ENCODE measurements at regions of chr4 and their contacts with region 1.

Region 1: DNA sequence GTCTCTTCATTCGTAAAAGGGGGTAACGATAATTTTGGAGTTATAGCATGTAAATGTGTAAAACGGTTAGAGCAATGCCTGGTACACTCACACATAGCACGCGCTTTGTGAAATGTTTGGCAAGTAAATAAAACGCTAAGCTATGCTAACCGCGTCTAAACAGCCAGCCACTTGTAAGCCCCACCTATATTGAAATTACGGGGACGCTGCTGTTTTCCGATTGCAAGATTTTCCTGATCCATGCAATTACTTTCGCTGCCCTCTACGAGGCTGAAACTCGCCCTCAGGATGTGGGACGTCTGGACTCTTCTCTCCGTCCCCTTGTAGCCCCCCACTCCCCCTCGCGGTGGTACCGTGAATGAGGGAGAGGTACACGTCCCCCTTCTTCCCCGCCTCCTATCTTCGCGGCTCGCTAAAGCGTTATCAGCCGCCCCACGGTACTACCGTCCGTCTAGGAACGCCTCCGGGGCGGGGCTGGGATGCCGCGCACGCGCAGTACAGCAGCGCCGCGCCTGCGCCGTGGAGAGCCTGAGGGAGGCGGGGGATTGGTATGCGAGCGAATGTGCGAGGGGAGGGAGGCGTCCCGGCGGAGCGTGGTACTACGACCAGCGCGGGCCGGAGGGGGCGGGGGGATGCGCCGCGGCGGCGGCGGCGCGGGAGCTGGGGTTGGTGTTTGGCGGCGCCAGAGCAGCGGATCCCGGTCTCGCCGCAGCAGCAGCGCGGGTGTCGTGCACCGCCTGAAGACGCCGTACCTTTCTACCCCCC is at the start of gene STIM2:
- DNase-seq: peak; percentile 96 to 99 (median 97)
- ATAC-seq: peak; percentile 93 to 96 (median 94)
- H3K4me3 ChIP-seq: peak within 1 kb of the TSS; percentile 61 to 93 (median 82)
- H3K27ac ChIP-seq: peak within 1 kb of the TSS; percentile 56 to 97 (median 94)
- H3K4me1 ChIP-seq: peaks cover 0 to 63% (median 39%) of the 10 kb centered on the region in 12 donors
- H3K27me3 ChIP-seq: no peaks in the 10 kb centered on the region
- CTCF ChIP-seq: peak in 10 of 12 donors; percentile 12 to 55 (median 32)
- POLR2A ChIP-seq: peak in 1 of 2 donors; percentile 94
- total RNA-seq, gene STIM2: 7.5 to 17.3 (median 9.9) TPM

Region 2: DNA sequence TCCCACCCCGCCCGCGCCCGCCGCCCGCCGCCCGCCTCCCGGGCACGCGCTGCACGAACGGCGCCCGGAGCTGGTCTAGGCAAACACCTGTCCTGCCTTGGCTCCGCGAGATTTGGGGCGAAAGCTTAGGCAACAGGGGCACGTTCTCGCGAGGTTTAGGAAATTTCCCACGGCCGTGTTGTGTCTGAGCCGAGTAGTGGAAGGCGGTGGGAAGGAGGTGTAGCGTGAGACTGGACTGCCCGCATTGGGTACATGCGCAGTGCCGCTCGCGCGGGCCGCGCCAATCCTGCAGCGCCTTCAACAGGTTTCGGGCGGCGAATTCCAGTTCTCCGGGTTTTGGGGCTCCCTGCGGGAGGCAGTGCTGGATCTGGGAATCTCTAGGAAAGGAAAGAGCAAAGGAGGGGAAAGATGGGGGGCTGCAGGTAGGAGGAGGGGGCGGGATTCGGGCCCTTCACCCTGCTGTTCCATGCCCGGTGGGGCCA is 540.8 kb before region 1 on chr4:
- intact Hi-C with region 1: loop called in 1 of 10 experiments (anchors 5 kb)
- DNase-seq: peak; percentile 97 to 98 (median 98)
- ATAC-seq: peak; percentile 93 to 95 (median 94)
- H3K4me3 ChIP-seq: peak overlapping the region; percentile 44 to 92 (median 74)
- H3K27ac ChIP-seq: peak overlapping the region; percentile 63 to 97 (median 92)
- H3K4me1 ChIP-seq: peaks cover 0 to 39% (median 28%) of the 10 kb centered on the region in 12 donors
- H3K27me3 ChIP-seq: no peaks in the 10 kb centered on the region
- CTCF ChIP-seq: peak in 5 of 12 donors; percentile 6 to 31 (median 20)
- POLR2A ChIP-seq: peak in 1 of 2 donors; percentile 29

Region 3: DNA sequence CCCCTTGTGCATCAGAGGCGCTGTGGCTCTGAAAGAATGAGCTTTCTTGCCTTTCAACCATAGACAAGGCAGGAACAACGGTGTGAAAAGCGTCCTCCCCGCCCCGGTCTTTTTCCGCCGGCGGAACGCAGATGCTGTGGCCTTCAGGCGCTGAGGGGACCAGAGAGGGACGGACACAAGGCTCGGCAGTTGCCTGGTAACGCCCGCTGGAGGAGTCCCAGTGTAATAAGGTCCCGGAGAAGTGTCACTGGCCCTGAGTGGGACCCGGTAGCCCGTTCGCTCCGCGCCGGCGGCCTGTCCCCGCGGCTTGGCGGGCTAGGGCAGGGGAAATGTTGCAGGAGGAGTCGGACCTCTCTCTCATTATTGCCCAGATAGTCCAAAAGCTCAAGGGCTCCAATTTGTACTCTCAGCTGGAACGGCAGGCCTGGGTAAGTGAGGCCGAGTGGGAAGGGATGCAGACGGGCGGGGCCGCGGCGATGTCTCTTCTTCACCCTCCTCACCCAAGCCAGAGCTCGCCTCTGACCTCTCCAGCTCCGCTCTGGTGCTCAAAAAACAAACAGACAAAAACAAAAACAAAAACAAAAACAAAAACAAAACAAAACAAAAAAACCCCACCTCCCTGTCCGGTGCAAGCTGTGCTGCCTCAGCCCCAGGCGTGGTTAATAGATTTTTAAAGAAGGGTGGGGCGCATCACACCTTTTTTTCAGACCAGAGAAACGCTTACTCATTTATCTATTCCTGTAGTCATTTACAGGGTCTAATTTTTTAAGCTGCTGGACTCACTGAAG is 276.3 kb before region 1 on chr4 and contains the start of gene TBC1D19:
- intact Hi-C with region 1: loop called in 4 of 10 experiments (anchors 5 to 10 kb)
- DNase-seq: peak; percentile 88 to 92 (median 91)
- ATAC-seq: peak; percentile 99 to 100 (median 100)
- H3K4me3 ChIP-seq: peak within 1 kb of the TSS; percentile 36 to 95 (median 78)
- H3K27ac ChIP-seq: peak within 1 kb of the TSS; percentile 18 to 80 (median 68)
- H3K4me1 ChIP-seq: peaks cover 0 to 22% (median 8%) of the 10 kb centered on the region in 12 donors
- H3K27me3 ChIP-seq: no peaks in the 10 kb centered on the region
- CTCF ChIP-seq: peak in 1 of 12 donors; percentile 7
- POLR2A ChIP-seq: peak in 1 of 2 donors; percentile 51
- total RNA-seq, gene TBC1D19: 6.4 to 10.9 (median 9.2) TPM

Region 4: DNA sequence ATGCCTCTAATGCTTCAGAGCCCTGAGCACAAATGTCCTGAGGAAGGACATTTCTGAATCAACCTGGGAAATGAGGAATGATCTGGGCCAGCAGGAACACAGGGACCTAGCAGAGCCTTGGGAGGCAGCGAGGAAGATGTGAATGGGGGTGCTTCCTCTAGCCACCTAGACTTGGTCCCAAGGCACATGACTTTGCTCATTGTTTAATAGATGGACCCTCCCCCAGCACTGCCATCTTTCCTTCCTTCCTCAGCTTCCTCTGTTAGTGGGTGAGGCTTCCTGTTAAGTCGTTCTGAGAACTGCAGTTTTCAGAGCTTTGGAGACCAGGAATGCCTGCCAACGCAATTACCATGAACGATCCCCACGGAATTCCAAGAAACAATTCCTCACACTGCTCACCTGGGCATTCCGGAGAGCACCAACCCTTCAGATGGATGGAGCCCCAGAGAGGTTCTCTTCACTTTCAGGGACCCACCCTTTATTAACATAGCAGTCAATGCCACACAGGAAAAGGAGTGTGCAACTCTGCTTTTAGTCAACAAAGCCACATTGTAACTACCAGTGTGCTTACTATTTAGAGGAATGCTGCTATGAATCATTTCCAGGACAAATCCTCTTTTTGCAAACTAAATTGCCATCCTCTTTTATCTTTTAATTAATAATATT is 48.2 kb before region 1 on chr4:
- intact Hi-C with region 1: loop called in 6 of 10 experiments (anchors 2 to 5 kb)
- DNase-seq: peak in 4 of 5 donors; percentile 30 to 51 (median 36)
- ATAC-seq: peak; percentile 62 to 83 (median 76)
- H3K4me3 ChIP-seq: no peak overlapping the region
- H3K27ac ChIP-seq: peak overlapping the region in 10 of 12 donors; percentile 2 to 74 (median 62)
- H3K4me1 ChIP-seq: peaks cover 0 to 50% (median 21%) of the 10 kb centered on the region in 12 donors
- H3K27me3 ChIP-seq: no peaks in the 10 kb centered on the region
- CTCF ChIP-seq: no peak
- POLR2A ChIP-seq: no peak

Region 5: GRCh38 chr4:26907731-26908599 is 47.6 kb after region 1 on chr4:
- intact Hi-C with region 1: loop called in 2 of 10 experiments (anchors 5 kb)
- DNase-seq: no peak
- ATAC-seq: no peak
- H3K4me3 ChIP-seq: peak overlapping the region in 4 of 12 donors; percentile 0 to 26 (median 16)
- H3K27ac ChIP-seq: peak overlapping the region in 10 of 12 donors; percentile 10 to 54 (median 41)
- H3K4me1 ChIP-seq: peaks cover 0 to 34% (median 9%) of the 10 kb centered on the region in 12 donors
- H3K27me3 ChIP-seq: no peaks in the 10 kb centered on the region
- CTCF ChIP-seq: no peak
- POLR2A ChIP-seq: no peak

Region 6: DNA sequence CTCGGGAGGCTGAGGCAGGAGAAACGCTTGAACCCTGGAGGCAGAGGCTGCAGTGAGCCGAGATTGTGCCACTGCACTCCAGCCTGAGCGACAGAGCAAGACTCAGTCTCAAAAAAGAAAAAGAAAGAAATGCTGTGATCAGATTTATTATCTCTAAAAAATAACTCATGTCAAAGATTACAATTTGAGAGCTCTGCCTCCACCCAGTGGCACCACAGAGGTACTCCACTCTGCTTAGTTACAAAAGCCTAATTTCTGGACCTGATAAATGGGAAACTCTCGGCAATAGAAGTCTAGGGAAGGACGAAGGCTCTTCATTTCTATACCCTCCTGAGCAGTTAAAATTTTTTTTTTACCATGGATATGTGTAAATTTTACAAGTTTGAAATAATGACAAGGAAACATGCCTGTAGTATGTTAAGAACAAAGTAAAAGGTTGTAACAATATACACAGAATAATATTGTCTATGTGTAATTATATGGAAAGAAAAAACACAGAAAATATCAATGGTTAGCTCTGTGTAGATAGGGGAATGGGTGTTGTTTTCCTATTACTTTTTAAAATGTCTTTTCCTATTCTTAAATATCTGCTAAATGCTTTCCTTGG is 150.1 kb after region 1 on chr4:
- intact Hi-C with region 1: loop called in 6 of 10 experiments (anchors 2 to 5 kb)
- DNase-seq: peak; percentile 36 to 60 (median 51)
- ATAC-seq: peak in 3 of 4 donors; percentile 75 to 87 (median 77)
- H3K4me3 ChIP-seq: no peak overlapping the region
- H3K27ac ChIP-seq: no peak overlapping the region
- H3K4me1 ChIP-seq: peaks cover 0 to 17% (median 0%) of the 10 kb centered on the region in 12 donors
- H3K27me3 ChIP-seq: no peaks in the 10 kb centered on the region
- CTCF ChIP-seq: peak; percentile 82 to 94 (median 90)
- POLR2A ChIP-seq: no peak

Region 7: GRCh38 chr4:27027428-27027827 is 167.1 kb after region 1 on chr4:
- intact Hi-C with region 1: no loop called
- DNase-seq: no peak
- ATAC-seq: no peak
- H3K4me3 ChIP-seq: no peak overlapping the region
- H3K27ac ChIP-seq: no peak overlapping the region
- H3K4me1 ChIP-seq: no peaks in the 10 kb centered on the region
- H3K27me3 ChIP-seq: no peaks in the 10 kb centered on the region
- CTCF ChIP-seq: no peak
- POLR2A ChIP-seq: no peak

Region 8: GRCh38 chr4:27293831-27294230 is 433.5 kb after region 1 on chr4:
- intact Hi-C with region 1: no loop called
- DNase-seq: no peak
- ATAC-seq: no peak
- H3K4me3 ChIP-seq: no peak overlapping the region
- H3K27ac ChIP-seq: no peak overlapping the region
- H3K4me1 ChIP-seq: no peaks in the 10 kb centered on the region
- H3K27me3 ChIP-seq: peaks cover 0 to 2% (median 0%) of the 10 kb centered on the region in 9 donors
- CTCF ChIP-seq: no peak
- POLR2A ChIP-seq: no peak